Activated T-helper 2 cell treated with anti-CD3 and anti-CD28 coated beads, Interferon-gamma antibody, Interleukin-2, Interleukin-4, amounts not matched to agents 10 μg/mL and 5 μg/mL and 100 μg/mL, durations not matched to agents 14 hours and 24 hours and 36 hours (primary cell): ENCODE measurements at regions of chr3 and their contacts with region 1.

Region 1: DNA sequence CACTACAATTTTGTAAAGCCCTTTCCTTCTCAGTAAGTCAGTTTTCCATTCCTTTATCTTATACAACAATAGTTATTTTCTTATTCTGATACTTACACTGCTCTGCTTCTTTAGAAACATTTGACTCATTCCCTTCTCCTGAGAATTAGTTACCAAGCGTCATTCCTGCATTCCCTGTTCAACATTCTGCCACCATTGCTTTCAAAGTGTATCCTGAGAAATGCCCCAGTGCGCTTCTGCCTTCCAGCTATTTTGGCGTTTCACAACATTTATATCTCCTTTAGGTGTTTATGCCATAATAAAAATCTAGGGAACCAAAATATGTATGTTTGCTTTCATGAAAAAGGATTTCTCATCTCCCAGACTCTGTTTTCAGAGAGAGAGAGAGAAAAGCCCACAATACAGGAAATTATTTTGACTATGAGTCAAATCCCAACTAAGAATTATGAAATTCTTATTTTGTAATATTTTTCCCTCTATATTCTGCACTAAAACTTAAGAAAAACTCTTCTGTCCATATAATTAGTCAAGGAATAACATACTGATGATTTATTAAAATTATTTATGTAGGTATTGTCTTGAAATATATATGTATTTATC is 118.2 kb upstream of the RAP2B start:
- DNase-seq: no peak
- H3K4me3 Mint-ChIP-seq: no peak overlapping the region
- H3K27ac Mint-ChIP-seq: no peak overlapping the region
- H3K4me1 Mint-ChIP-seq: peaks cover 5% of the 10 kb centered on the region
- H3K27me3 Mint-ChIP-seq: peaks cover 4% of the 10 kb centered on the region

Region 2: GRCh38 chr3:153291056-153291685 is 247.3 kb after region 1 on chr3:
- intact Hi-C with region 1: loop called (anchors 2 kb)
- DNase-seq: no peak
- H3K4me3 Mint-ChIP-seq: no peak overlapping the region
- H3K27ac Mint-ChIP-seq: no peak overlapping the region
- H3K4me1 Mint-ChIP-seq: peaks cover 21% of the 10 kb centered on the region
- H3K27me3 Mint-ChIP-seq: no peaks in the 10 kb centered on the region

Region 3: GRCh38 chr3:153595186-153595815 is 551.5 kb after region 1 on chr3:
- intact Hi-C with region 1: loop called (anchors 5 kb)
- DNase-seq: no peak
- H3K4me3 Mint-ChIP-seq: no peak overlapping the region
- H3K27ac Mint-ChIP-seq: no peak overlapping the region
- H3K4me1 Mint-ChIP-seq: peaks cover 4% of the 10 kb centered on the region
- H3K27me3 Mint-ChIP-seq: no peaks in the 10 kb centered on the region